Posterior cingulate gyrus (tissue), 11 donors: ENCODE measurements at regions of chr12 and their contacts with region 1.

Region 1: DNA sequence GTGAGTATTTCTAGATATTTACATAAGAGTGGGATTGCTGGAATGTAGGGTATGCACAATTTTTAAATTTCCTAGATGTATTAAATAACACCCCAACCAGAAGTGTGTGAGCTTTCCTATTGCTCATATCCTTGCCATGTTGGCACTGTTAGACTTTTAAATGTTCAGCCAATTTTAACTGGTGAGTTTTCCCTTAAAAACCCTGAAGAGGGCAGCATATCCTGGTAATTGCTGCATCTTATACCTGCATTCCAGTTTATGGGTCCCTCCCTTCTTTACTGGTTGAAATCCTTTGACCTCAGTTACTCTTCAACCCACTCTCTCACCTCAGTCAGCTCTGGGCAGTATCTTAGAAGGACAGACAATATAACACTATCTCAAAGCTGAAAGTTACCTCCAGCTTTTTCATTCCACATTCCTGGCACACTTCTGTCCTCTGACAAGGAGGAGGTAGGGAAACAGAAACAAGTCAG is 270.6 kb downstream of the PAWR start:
- DNase-seq: no peak

Region 2: GRCh38 chr12:79531122-79531913 is 111.1 kb after region 1 on chr12:
- intact Hi-C with region 1: loop called (anchors 10 kb)
- DNase-seq: no peak